Left cardiac atrium (tissue), 4 donors: ENCODE measurements at regions of chr2 and their contacts with region 1.

Region 1: GRCh38 chr2:152335010-152335725 is at the start of gene FMNL2:
- DNase-seq: peak; percentile 87
- ATAC-seq: peak; percentile 91 to 94
- total RNA-seq, gene FMNL2: 11.3 to 16.6 TPM

Region 2: DNA sequence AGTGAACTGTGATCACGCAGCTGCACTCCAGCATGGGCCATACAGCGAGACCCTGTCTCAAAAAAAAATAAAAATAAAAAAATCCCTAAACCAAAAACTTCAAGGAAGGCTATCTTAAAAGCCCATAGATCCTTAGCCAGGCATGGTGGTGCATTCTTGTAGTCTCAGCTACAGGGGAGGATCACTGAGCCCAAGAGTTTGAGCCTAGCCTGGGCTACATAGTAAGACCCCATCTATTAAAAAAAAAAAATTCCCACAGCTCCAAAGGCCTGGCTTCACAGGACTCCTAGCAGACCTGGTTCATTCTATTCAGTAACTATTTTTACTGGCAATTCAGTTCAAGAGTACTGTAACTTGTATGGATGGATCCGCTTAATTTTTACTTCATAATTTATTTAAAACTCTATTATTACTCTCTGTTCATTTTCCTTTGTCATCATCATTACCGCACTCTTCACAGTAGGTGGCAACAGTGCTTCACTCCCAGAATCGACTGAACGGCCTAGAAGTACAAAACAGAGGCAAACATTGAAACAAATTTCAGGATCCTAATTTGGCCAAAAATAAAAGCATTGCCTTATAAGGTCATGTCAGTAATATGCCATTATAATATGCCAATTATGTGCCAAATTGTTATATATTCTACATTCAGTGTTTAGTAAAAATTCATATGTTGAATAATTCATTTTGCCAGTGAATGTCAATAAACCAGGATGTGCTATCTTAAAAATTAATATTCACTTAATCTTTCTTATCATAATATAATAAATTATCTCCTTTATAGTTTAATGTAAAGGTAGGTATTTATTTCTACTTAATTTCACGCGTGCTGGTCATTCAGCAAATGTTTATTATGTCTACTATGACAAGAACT is 145.3 kb before region 1 on chr2:
- intact Hi-C with region 1: loop called in 1 of 2 experiments (anchors 5 kb)
- DNase-seq: peak; percentile 39
- ATAC-seq: peak; percentile 90 to 93

Region 3: DNA sequence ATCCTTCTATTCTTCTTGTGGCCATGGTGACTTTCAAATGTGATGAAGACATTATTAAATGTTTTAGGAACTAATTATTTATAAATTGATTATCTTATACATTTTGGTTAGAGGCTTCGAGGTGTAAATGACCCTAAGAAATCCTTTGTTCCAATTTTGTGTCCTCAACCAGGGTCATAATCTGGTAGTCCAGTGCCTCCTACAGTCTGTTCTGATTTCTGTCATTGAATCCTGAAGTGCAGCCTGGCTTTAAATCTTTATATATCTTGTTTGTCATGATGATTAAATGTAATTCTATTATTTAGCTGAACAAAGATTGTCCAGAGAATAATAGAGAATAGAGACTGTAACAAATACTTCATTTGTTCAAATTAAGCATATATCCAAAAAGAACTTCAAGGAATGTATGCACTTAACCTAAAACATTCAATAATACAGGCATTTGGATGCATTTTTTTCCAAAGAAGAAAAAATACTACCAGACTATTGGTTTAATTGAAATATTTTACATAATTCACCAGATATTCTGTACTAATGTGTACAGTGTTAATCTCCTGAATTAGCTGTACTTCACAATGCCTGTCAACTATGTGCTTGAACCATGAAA is 292.3 kb after region 1 on chr2:
- intact Hi-C with region 1: loop called (anchors 10 kb)
- DNase-seq: no peak
- ATAC-seq: peak in 1 of 2 donors; percentile 63

Region 4: GRCh38 chr2:152635635-152636298 is 300.6 kb after region 1 on chr2:
- intact Hi-C with region 1: loop called in 1 of 2 experiments (anchors 10 kb)
- DNase-seq: peak; percentile 48
- ATAC-seq: peak; percentile 68 to 69